PC-3 (cell line): ENCODE measurements at regions of chr13 and their contacts with region 1.

Region 1: GRCh38 chr13:103883164-103883563 is 816.9 kb upstream of the SLC10A2 start:
- DNase-seq: peak; percentile 97
- ATAC-seq: peak; percentile 94
- H3K4me3 ChIP-seq: peak overlapping the region; percentile 46
- H3K27ac ChIP-seq: no peak overlapping the region
- H3K4me1 ChIP-seq: peaks cover 9% of the 10 kb centered on the region
- H3K27me3 ChIP-seq: no peaks in the 10 kb centered on the region
- CTCF ChIP-seq: peak; percentile 70

Region 2: GRCh38 chr13:103839460-103839859 is 43.7 kb before region 1 on chr13:
- CTCF ChIA-PET with region 1: no interaction called
- POLR2A ChIA-PET with region 1: no interaction called
- intact Hi-C with region 1: no loop called
- DNase-seq: no peak
- ATAC-seq: no peak
- H3K4me3 ChIP-seq: no peak overlapping the region
- H3K27ac ChIP-seq: no peak overlapping the region
- H3K4me1 ChIP-seq: no peaks in the 10 kb centered on the region
- H3K27me3 ChIP-seq: no peaks in the 10 kb centered on the region
- CTCF ChIP-seq: no peak

Region 3: GRCh38 chr13:104006625-104007075 is 123.5 kb after region 1 on chr13:
- CTCF ChIA-PET with region 1: no interaction called
- POLR2A ChIA-PET with region 1: no interaction called
- intact Hi-C with region 1: loop called (anchors 2 kb)
- DNase-seq: peak; percentile 21
- ATAC-seq: peak; percentile 44
- H3K4me3 ChIP-seq: no peak overlapping the region
- H3K27ac ChIP-seq: no peak overlapping the region
- H3K4me1 ChIP-seq: peaks cover 26% of the 10 kb centered on the region
- H3K27me3 ChIP-seq: no peaks in the 10 kb centered on the region
- CTCF ChIP-seq: no peak

Region 4: DNA sequence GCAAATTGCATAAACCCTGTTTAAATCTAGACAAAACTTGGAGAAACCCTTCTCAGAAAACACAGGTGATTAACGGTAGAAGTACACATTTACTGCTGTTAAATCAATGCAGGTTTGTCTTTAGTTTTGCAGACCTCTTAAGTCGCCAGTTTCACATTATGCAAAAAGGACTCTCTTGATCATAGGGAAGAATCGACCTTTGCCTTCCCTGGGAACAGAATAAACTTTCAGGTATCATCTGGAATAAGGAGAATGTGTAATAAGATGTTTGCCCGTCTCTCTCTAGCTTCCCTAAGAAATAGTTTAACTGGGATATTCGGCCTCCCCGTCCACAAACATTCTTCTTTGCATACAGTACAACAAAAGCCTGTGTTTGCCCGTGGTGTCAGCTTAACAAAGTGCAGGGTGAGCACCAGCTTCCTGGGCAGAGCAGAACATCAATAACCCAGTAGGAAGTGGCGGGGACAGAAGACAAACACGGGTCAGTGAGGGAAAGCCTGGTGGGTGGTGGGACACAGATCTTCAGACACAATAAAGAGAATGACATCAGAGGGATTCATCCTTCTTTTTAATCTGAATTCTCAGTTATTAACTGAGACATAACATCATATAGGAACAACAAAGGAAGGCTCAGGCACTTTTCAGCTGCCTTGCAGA is 260.7 kb after region 1 on chr13:
- CTCF ChIA-PET with region 1: no interaction called
- POLR2A ChIA-PET with region 1: no interaction called
- intact Hi-C with region 1: loop called (anchors 10 kb)
- DNase-seq: peak; percentile 1
- ATAC-seq: peak; percentile 82
- H3K4me3 ChIP-seq: no peak overlapping the region
- H3K27ac ChIP-seq: no peak overlapping the region
- H3K4me1 ChIP-seq: no peaks in the 10 kb centered on the region
- H3K27me3 ChIP-seq: no peaks in the 10 kb centered on the region
- CTCF ChIP-seq: no peak

Region 5: GRCh38 chr13:104571161-104571892 is 688.2 kb after region 1 on chr13:
- CTCF ChIA-PET with region 1: no interaction called
- POLR2A ChIA-PET with region 1: no interaction called
- intact Hi-C with region 1: loop called (anchors 1 kb)
- DNase-seq: peak; percentile 90
- ATAC-seq: peak; percentile 96
- H3K4me3 ChIP-seq: peak overlapping the region; percentile 55
- H3K27ac ChIP-seq: peak overlapping the region; percentile 68
- H3K4me1 ChIP-seq: peaks cover 17% of the 10 kb centered on the region
- H3K27me3 ChIP-seq: no peaks in the 10 kb centered on the region
- CTCF ChIP-seq: peak; percentile 66

Region 6: GRCh38 chr13:104773775-104774174 is 890.6 kb after region 1 on chr13:
- CTCF ChIA-PET with region 1: no interaction called
- POLR2A ChIA-PET with region 1: no interaction called
- intact Hi-C with region 1: loop called (anchors 10 kb)
- DNase-seq: peak; percentile 71
- ATAC-seq: peak; percentile 70
- H3K4me3 ChIP-seq: no peak overlapping the region
- H3K27ac ChIP-seq: no peak overlapping the region
- H3K4me1 ChIP-seq: 0 out of 2 replicates have a peak, but pooled peaks cover 2% of the 10 kb centered on the region
- H3K27me3 ChIP-seq: no peaks in the 10 kb centered on the region
- CTCF ChIP-seq: peak; percentile 66